GM10248 (cell line): ENCODE measurements at regions of chr15 and their contacts with region 1.

Region 1: GRCh38 chr15:76185716-76186115 is 125.6 kb downstream of the ETFA start:
- DNase-seq: peak; percentile 60
- CTCF ChIP-seq: peak; percentile 41

Region 2: GRCh38 chr15:76024021-76024768 is 161.5 kb before region 1 on chr15:
- CTCF ChIA-PET with region 1: no interaction called
- POLR2A ChIA-PET with region 1: no interaction called
- DNase-seq: no peak
- CTCF ChIP-seq: no peak

Region 3: DNA sequence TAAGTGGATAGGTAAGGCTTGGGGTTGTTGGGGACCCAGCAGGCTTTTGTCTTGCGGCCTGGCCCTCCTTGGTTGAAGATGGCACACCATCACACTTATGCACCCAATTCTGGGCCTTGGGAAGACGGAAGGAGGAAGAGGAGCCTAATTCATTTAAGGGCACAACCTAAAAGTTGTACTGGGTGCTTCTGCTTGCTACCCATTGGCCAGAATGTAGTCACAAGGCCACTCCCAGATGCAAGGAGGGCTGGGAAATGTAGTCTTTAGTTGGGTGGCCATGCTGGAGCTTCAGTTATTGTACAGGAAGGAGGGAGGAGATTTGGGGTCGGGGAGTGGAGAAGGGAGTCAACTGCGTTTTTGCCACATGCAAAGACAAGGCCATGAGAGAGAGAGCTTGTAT is 16.7 kb before region 1 on chr15:
- CTCF ChIA-PET with region 1: interaction called, 17 read pairs
- POLR2A ChIA-PET with region 1: no interaction called
- DNase-seq: no peak
- CTCF ChIP-seq: no peak

Region 4: DNA sequence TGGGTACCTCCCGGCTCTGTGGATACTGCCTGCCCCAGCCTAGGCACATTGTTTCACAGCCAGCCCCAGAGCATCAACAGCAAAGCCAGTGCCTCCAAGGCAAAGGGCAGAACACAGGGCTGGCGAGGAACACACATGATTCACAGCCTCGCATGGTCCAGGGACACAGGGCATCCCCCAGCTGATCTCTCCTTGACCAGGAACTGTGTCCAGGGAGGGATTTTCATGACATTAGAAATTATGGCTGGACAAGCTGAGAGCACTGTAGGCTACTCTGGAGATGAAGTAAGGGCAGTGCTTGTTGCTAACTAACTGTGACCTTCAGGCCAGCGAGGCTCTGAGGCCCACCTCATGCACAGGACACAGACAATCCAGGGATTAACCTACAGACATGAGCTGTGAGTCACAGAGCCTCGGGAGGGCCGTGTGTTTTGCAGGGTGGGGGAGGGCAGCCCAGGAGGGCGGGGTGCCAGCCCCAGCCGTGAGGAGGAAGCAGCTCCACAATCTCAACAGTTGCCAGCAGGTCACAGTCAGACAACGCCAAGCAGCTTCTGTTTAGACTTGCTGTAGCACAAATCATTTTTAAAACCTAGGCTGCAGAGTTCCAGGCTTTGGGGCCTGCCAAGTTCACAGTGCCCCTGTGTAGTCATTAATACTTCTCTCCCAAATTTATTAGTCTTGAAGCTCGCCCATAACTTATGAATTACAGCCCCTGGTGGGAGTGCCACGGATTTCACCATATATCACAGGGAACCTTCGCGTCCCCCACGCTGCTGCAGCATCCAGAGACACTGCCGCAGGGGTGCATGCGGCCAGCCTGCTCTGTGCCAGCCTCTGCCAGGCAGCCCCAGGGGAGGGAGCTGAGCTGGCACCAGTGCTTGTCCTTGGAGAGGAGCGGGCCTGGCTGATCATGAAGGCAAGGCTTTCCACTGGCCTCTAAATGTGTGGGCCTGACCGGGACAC is 10.8 kb after region 1 on chr15:
- CTCF ChIA-PET with region 1: interaction called, 26 read pairs
- POLR2A ChIA-PET with region 1: no interaction called
- DNase-seq: no peak
- CTCF ChIP-seq: no peak

Region 5: GRCh38 chr15:76330080-76330680 is 144.5 kb after region 1 on chr15:
- CTCF ChIA-PET with region 1: interaction called, 11 read pairs
- POLR2A ChIA-PET with region 1: no interaction called
- DNase-seq: no peak
- CTCF ChIP-seq: peak; percentile 30